ENCODE measurements at regions of chr1 and their contacts with region 1.

Region 1: DNA sequence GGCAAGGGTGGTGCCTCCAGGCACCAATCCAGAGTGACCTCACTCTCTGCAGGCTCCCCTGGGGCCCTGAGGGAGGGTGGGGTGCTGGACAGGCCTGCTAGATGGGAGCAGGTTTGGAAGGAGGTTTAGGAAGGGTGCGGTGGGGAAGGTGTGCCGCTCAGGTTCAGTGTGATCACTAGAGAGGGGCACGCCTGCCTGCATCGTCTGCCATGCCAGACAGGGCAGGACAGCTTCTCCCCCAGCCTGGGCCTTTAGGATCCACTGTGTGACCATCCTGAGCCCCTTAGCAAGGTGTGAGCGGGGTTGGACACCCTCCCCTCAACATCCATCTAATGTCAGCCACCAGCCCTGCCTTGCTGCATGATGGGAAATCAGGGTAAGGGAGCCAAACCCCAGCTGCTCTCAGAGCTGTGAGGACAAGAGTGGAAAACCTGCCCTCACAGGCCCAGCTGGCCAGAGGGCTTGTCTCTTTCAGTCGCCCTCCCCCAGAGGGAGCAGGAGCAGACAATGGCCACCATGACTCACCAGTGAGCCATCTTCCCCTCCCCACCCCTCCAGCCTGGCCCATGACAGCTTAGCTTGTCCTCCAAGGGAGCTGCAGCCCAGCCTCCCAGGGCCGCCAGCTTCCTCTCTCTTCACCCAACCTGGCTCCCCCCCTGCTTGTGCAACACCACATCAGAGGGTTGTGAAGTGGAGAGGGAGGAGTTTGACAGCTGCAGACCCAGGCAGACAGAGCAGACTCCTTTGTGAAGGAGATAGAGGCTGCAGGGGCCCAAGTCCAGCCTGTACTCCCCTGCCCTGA is 37.0 kb downstream of the NUAK2 start:
- DNase-seq: peak; percentile 63
- ATAC-seq: peak; percentile 42
- H3K4me3 Mint-ChIP-seq: peak overlapping the region; percentile 67
- H3K27ac Mint-ChIP-seq: peak overlapping the region; percentile 98
- H3K4me1 Mint-ChIP-seq: peaks cover 90% of the 10 kb centered on the region
- H3K27me3 Mint-ChIP-seq: no peaks in the 10 kb centered on the region
- CTCF ChIP-seq: no peak

Region 2: GRCh38 chr1:203290261-203291089 is 1994.1 kb before region 1 on chr1:
- CTCF ChIA-PET with region 1: no interaction called
- POLR2A ChIA-PET with region 1: no interaction called
- intact Hi-C with region 1: loop called (anchors 5 kb)
- DNase-seq: peak; percentile 95
- ATAC-seq: peak; percentile 41
- H3K4me3 Mint-ChIP-seq: peak overlapping the region; percentile 85
- H3K27ac Mint-ChIP-seq: peak overlapping the region; percentile 100
- H3K4me1 Mint-ChIP-seq: peaks cover 95% of the 10 kb centered on the region
- H3K27me3 Mint-ChIP-seq: no peaks in the 10 kb centered on the region
- CTCF ChIP-seq: no peak

Region 3: DNA sequence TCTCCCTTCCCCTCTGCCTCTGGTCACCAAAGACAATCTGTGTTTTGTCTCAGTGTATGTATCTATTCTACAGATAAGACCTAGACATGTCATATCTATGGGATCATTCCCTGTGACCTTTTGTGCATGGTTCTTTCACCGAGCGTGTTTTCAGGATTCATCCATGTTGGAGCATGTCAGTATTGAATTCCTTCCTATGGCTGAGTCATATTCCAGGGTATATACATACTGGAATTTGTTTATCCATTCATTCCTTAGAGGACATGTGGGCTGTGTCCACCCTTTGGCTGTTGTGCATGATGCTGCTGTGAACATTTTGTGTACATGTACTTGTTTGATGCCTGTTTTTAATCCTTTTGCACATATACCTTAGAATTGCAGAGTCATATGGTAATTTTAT is 344.0 kb before region 1 on chr1:
- CTCF ChIA-PET with region 1: no interaction called
- POLR2A ChIA-PET with region 1: no interaction called
- intact Hi-C with region 1: no loop called
- DNase-seq: no peak
- ATAC-seq: no peak
- H3K4me3 Mint-ChIP-seq: no peak overlapping the region
- H3K27ac Mint-ChIP-seq: no peak overlapping the region
- H3K4me1 Mint-ChIP-seq: no peaks in the 10 kb centered on the region
- H3K27me3 Mint-ChIP-seq: peaks cover 5% of the 10 kb centered on the region
- CTCF ChIP-seq: no peak

Region 4: GRCh38 chr1:205237526-205238484 is 46.7 kb before region 1 on chr1:
- CTCF ChIA-PET with region 1: no interaction called
- POLR2A ChIA-PET with region 1: no interaction called
- intact Hi-C with region 1: no loop called
- DNase-seq: peak; percentile 10
- ATAC-seq: no peak
- H3K4me3 Mint-ChIP-seq: no peak overlapping the region
- H3K27ac Mint-ChIP-seq: no peak overlapping the region
- H3K4me1 Mint-ChIP-seq: peaks cover 20% of the 10 kb centered on the region
- H3K27me3 Mint-ChIP-seq: peaks cover 4% of the 10 kb centered on the region
- CTCF ChIP-seq: no peak

Region 5: DNA sequence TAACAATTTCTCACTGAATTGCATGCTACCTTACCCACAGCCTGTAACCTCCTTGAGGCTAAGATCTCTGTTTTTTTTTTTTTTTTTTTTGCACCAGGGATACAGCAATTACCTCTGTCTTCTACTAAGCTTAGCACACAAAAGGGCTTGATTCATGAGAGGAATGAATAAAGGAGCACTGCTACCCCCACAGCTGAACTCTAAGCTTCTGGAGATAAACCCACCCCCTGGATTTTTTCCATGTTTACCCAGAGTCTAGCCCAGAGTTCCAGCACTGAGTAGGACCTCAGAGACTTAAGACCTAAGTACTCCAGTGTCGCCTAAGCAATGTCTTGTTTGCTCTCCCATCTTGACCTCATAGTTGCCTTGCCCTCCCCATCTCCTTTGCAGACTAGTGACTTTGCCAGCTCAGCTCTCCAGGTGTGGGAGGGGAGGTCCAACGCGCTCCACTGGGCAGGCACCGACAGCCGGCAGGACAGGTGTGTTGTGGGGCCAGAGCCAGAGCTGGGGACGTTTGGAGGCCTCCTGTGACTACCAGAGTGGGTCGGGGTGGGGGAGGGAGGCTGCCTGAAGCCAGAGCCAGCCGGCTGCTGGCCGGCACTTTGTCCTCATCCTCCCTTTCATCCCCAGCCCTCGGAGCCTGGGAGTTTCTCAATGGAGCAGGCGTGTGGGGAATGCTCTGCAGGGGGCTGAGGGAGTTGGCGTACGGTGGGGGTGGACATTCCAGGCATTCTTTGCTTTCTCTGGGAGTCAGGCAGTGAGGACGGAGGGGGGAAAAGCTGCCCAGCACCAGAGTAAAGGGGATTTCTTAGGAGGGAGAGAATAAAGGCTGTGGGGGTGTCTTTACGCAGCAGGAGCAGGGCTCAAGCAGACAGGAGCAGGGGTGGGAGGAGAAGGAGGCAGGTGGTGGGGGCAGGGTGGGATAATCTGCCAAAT is 16.6 kb after region 1 on chr1:
- CTCF ChIA-PET with region 1: interaction called, 4 read pairs
- POLR2A ChIA-PET with region 1: interaction called, 1,622 read pairs
- intact Hi-C with region 1: no loop called
- DNase-seq: no peak
- ATAC-seq: peak; percentile 59
- H3K4me3 Mint-ChIP-seq: peak overlapping the region; percentile 46
- H3K27ac Mint-ChIP-seq: peak overlapping the region; percentile 78
- H3K4me1 Mint-ChIP-seq: peaks cover 69% of the 10 kb centered on the region
- H3K27me3 Mint-ChIP-seq: no peaks in the 10 kb centered on the region
- CTCF ChIP-seq: no peak

Region 6: DNA sequence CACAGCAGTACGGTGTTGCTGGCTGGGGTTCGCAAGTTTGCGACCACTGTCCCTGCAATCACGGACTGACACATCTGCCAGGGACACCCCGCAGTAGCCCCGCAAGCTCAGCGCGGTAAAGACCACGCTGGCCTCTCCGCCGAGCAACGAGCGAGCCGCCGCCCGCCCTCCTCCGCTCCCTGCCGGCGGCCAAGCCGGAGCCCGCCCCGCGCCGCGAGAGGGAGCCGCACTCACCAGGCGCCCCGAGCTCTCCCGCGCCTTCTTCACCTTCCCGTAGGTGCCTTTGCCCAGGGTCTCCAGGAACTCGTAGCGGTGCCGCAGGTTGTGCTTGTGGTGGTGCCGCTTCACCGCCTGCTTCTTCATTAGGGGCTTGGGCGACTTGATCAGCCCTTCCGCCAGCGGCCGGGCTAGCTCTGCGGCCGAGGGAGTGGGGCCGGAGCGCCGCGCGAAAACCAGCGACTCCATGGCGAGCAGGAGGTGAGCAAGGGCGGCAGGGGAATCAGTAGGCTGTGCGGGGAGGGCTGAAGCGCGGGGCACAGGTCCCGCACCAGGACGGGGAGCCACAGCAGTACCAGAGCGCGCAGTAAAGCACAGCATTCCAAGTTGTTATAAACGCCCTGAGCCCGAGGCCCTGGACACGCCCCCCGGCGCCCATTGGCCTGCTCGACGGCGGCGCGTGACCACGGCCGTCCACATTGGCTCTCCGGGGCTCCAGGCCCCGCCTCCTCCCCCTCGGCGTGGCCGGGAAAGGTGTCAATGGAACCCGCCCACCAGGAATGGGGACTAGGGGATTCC is 36.8 kb after region 1 on chr1 and contains the start of gene NUAK2:
- CTCF ChIA-PET with region 1: interaction called, 139 read pairs
- POLR2A ChIA-PET with region 1: interaction called, 1,622 read pairs
- intact Hi-C with region 1: loop called (anchors 1 kb)
- DNase-seq: peak; percentile 83
- ATAC-seq: peak; percentile 86
- H3K4me3 Mint-ChIP-seq: peak within 1 kb of the TSS; percentile 97
- H3K27ac Mint-ChIP-seq: peak within 1 kb of the TSS; percentile 98
- H3K4me1 Mint-ChIP-seq: peaks cover 78% of the 10 kb centered on the region
- H3K27me3 Mint-ChIP-seq: peaks cover 2% of the 10 kb centered on the region
- CTCF ChIP-seq: no peak
- total RNA-seq, gene NUAK2: 26.1 and 26.2 TPM in 2 replicates

Region 7: GRCh38 chr1:205504311-205504984 is 219.9 kb after region 1 on chr1 and contains the start of gene CDK18:
- CTCF ChIA-PET with region 1: no interaction called
- POLR2A ChIA-PET with region 1: no interaction called
- intact Hi-C with region 1: no loop called
- DNase-seq: peak; percentile 41
- ATAC-seq: peak; percentile 79
- H3K4me3 Mint-ChIP-seq: peak within 1 kb of the TSS; percentile 81
- H3K27ac Mint-ChIP-seq: no peak within 1 kb of the TSS
- H3K4me1 Mint-ChIP-seq: peaks cover 13% of the 10 kb centered on the region
- H3K27me3 Mint-ChIP-seq: no peaks in the 10 kb centered on the region
- CTCF ChIP-seq: no peak
- total RNA-seq, gene CDK18: 1.9 and 2.6 TPM in 2 replicates

Region 8: DNA sequence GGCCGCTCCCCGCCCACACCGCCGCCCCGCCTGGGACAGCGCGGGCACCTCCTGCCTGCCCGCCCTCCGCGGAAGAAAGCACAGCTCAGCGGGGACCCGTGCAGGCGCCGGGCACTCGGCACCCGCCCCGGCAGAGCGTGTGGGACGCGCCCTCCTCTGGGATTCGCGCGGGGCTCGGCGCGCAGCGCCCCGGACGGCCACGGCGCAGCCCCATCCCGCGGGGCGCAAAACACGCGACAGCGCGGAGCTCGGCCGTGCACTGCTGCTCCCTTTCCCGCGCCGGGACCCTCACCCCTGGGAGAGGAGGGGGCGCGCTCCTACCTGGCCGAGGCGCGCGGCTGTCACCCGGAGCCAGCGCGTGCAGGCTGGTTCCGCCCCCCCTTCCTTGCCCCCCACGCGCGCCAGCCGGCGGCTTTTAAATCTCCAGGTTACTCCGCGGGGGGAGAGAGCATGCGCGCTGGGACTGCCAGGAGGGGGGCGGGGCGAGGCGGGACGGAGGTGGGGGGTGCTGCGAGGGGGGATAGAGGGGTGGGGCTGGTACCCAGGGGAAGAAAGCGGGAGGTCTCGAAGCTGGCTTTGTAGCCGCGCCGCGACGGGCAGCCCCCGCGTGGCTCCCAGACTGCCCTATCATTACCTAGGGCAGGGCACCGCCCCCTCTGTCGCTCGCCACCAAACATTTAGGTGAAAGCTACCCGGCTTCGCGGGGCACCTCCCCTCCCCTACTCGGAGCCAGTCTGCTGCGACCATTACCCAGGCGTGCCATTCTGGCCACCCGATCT is 395.7 kb after region 1 on chr1 and contains the start of gene SLC45A3:
- CTCF ChIA-PET with region 1: no interaction called
- POLR2A ChIA-PET with region 1: interaction called, 10 read pairs
- intact Hi-C with region 1: no loop called
- DNase-seq: no peak
- ATAC-seq: peak; percentile 75
- H3K4me3 Mint-ChIP-seq: peak within 1 kb of the TSS; percentile 85
- H3K27ac Mint-ChIP-seq: peak within 1 kb of the TSS; percentile 46
- H3K4me1 Mint-ChIP-seq: peaks cover 26% of the 10 kb centered on the region
- H3K27me3 Mint-ChIP-seq: peaks cover 2% of the 10 kb centered on the region
- CTCF ChIP-seq: no peak
- total RNA-seq, gene SLC45A3: 6.9 and 7.4 TPM in 2 replicates

Region 9: GRCh38 chr1:206925106-206925736 is 1640.7 kb after region 1 on chr1:
- CTCF ChIA-PET with region 1: no interaction called
- POLR2A ChIA-PET with region 1: interaction called, 3 read pairs
- intact Hi-C with region 1: loop called (anchors 10 kb)
- DNase-seq: peak; percentile 63
- ATAC-seq: peak; percentile 55
- H3K4me3 Mint-ChIP-seq: no peak overlapping the region
- H3K27ac Mint-ChIP-seq: no peak overlapping the region
- H3K4me1 Mint-ChIP-seq: peaks cover 33% of the 10 kb centered on the region
- H3K27me3 Mint-ChIP-seq: no peaks in the 10 kb centered on the region
- CTCF ChIP-seq: no peak